CD8-positive, alpha-beta T cell (primary cell): ENCODE measurements at regions of chr18 and their contacts with region 1.

Region 1: DNA sequence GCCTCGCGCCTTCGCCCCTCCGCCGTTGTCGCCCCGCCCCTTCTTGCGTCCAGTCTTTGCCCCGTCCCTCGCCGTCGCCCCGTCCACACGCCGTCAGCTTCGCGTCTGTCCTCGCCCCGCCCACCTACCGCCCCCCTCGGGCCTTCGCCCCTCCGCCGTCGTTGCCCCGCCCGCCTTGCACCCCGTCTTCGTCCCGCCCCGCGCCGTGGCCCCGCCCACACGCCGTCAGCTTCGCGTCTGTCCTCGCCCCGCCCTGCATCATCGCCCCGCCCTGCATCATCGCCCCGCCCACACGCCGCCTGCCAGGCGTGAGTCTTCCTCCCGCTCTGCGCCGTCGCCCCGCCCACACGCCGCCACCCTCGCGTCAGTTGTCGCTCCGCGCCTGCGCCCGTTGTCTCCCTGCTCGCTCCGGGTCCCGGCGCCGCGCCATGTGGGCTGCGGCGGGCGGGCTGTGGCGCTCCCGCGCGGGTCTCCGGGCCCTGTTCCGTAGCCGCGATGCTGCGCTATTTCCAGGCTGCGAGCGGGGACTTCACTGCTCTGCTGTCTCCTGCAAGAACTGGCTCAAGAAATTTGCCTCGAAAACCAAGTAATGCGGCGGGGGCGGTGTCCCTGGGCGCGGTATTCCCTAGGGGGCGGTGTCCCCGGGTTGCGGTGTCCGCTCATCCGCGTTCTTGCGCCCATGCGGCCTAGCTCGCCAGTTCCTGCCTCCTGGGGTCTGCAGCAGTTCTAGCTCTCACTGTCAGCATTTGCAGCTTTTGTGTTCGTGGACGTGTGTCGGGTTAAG is at the start of gene RBFA:
- DNase-seq: peak; percentile 99 to 100 (median 100)
- ATAC-seq: peak; percentile 77
- H3K4me3 ChIP-seq: peak within 1 kb of the TSS; percentile 87 to 89
- H3K4me3 Mint-ChIP-seq: peak within 1 kb of the TSS; percentile 92
- H3K27ac ChIP-seq: peak within 1 kb of the TSS; percentile 79 to 97
- H3K27ac Mint-ChIP-seq: peak within 1 kb of the TSS; percentile 95
- H3K4me1 ChIP-seq: peaks cover 19% of the 10 kb centered on the region
- H3K4me1 Mint-ChIP-seq: peaks cover 27% of the 10 kb centered on the region
- H3K27me3 ChIP-seq: no peaks in the 10 kb centered on the region
- H3K27me3 Mint-ChIP-seq: no peaks in the 10 kb centered on the region
- CTCF ChIP-seq: no peak
- total RNA-seq, gene RBFA: 10.4 to 11.9 TPM

Region 2: DNA sequence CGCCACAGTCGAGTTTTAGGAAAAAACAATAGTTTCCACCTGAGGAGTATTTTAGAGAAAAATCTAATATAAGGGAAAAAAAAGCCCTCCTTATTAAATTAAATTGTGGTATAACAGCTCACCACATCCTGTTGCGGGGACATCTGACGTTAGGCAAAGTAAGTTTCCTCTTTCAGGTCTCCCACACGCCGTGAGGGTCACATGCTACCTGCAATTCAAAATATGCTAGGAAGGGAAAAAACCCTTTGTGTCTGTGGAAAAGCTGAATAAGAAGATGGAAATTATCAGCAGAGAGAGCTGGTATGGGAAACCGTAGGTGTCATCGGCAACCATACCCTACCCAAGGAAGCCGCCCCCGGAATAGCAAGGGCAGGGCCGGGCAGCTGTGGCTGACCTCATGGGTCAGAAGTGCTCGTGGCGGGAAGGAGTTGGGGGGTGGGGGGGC is 510.5 kb before region 1 on chr18:
- CTCF ChIA-PET with region 1: no interaction called
- POLR2A ChIA-PET with region 1: no interaction called
- intact Hi-C with region 1: loop called in 1 of 2 experiments (anchors 5 kb)
- DNase-seq: peak; percentile 44 to 93 (median 73)
- ATAC-seq: peak; percentile 52
- H3K4me3 ChIP-seq: peak overlapping the region; percentile 44 to 52
- H3K4me3 Mint-ChIP-seq: peak overlapping the region; percentile 86
- H3K27ac ChIP-seq: peak overlapping the region; percentile 81
- H3K27ac Mint-ChIP-seq: peak overlapping the region; percentile 97
- H3K4me1 ChIP-seq: peaks cover 62% of the 10 kb centered on the region
- H3K4me1 Mint-ChIP-seq: peaks cover 58% of the 10 kb centered on the region
- H3K27me3 ChIP-seq: no peaks in the 10 kb centered on the region
- H3K27me3 Mint-ChIP-seq: no peaks in the 10 kb centered on the region
- CTCF ChIP-seq: no peak

Region 3: DNA sequence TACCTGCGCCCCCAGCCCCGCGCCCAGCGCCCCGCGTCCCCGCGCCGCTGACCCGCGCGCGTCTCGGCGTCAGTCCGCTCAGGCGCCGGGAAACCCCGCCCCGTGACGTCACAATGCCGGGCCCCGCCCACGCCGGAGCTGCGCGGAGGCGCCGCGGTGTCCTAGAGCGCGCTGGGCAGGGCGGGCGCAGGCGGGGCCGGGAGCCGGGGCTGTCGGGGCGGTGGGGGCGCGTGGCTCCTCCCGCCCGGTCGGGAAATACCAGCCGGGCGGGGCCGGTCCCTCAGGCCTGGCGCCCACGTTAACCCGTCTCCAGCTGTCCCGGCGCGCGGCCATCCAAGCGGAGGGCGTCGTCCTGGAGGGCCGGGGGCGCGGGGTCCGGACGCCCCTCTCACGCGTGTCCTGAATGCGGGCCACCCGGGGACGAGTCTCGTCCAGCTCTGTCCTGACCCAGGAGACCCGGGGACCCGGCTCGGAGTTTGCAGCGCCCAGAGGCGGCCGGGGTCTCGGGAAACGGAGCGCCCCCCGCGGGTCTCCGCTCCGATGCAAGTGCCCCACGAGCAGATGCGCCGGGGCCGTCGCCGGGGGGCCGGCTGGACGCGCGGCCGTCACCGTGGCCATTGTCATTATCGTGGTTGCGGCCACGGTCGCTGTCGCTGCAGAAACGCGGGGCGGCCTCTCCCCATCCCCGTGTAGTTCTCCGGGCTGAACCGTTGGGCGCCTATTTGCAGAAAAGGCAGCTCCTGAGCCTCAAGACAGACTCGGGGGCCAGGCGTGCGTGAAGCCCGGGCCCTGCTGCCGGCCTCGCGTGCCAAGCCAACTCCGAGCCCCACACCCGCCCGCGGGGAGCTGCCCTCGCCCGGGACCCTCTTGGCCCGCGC is 82.4 kb before region 1 on chr18 and contains the start of gene SLC66A2:
- CTCF ChIA-PET with region 1: no interaction called
- POLR2A ChIA-PET with region 1: interaction called, 5 read pairs
- intact Hi-C with region 1: loop called (anchors 1 kb)
- DNase-seq: peak; percentile 91 to 99 (median 94)
- ATAC-seq: peak; percentile 93
- H3K4me3 ChIP-seq: peak within 1 kb of the TSS; percentile 60 to 69
- H3K4me3 Mint-ChIP-seq: peak within 1 kb of the TSS; percentile 88
- H3K27ac ChIP-seq: peak within 1 kb of the TSS in 1 of 2 experiments; percentile 58
- H3K27ac Mint-ChIP-seq: peak within 1 kb of the TSS; percentile 83
- H3K4me1 ChIP-seq: peaks cover 26% of the 10 kb centered on the region
- H3K4me1 Mint-ChIP-seq: peaks cover 26% of the 10 kb centered on the region
- H3K27me3 ChIP-seq: no peaks in the 10 kb centered on the region
- H3K27me3 Mint-ChIP-seq: no peaks in the 10 kb centered on the region
- CTCF ChIP-seq: no peak
- total RNA-seq, gene SLC66A2: 50.0 to 53.4 TPM

Region 4: DNA sequence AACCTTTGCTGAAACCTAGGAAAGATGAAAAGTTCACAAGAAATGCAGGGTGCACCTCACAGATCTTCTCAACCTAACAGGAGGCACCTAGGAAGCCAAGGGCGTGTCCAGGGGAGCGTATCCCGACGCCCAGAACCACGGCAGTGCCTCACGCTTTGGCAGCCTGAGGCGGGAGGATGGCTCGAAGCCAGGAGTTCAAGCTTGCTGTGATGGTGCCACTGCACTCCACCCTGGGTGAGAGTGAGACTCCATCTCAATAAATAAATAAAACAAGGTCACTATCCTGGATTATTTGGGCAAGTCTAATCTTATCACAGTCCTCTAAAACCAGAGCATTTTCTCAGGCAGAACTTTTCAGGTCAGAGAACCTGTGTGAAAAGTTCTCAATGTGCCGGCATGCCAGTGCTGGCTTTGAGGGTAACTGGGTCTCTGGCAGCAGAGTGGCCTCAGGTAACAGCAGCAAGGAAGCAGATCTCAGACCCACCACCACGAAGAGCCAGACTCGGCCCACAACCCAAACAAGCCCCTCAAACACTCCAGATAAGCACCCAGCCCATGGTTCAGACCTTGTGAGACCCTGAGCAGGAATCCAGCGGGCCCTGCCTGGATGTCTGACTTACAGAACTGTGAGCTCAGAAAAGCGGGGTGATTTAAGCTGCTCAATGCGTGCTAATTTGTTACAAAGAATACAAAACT is 58.1 kb before region 1 on chr18:
- CTCF ChIA-PET with region 1: no interaction called
- POLR2A ChIA-PET with region 1: no interaction called
- intact Hi-C with region 1: no loop called
- DNase-seq: no peak
- ATAC-seq: no peak
- H3K4me3 ChIP-seq: no peak overlapping the region
- H3K4me3 Mint-ChIP-seq: no peak overlapping the region
- H3K27ac ChIP-seq: no peak overlapping the region
- H3K27ac Mint-ChIP-seq: peak overlapping the region; percentile 27
- H3K4me1 ChIP-seq: peaks cover 12% of the 10 kb centered on the region
- H3K4me1 Mint-ChIP-seq: peaks cover 31% of the 10 kb centered on the region
- H3K27me3 ChIP-seq: no peaks in the 10 kb centered on the region
- H3K27me3 Mint-ChIP-seq: no peaks in the 10 kb centered on the region
- CTCF ChIP-seq: no peak

Region 5: GRCh38 chr18:80056095-80056494 is 21.8 kb after region 1 on chr18:
- CTCF ChIA-PET with region 1: no interaction called
- POLR2A ChIA-PET with region 1: no interaction called
- intact Hi-C with region 1: no loop called
- DNase-seq: no peak
- ATAC-seq: no peak
- H3K4me3 ChIP-seq: no peak overlapping the region
- H3K4me3 Mint-ChIP-seq: no peak overlapping the region
- H3K27ac ChIP-seq: no peak overlapping the region
- H3K27ac Mint-ChIP-seq: no peak overlapping the region
- H3K4me1 ChIP-seq: no peaks in the 10 kb centered on the region
- H3K4me1 Mint-ChIP-seq: no peaks in the 10 kb centered on the region
- H3K27me3 ChIP-seq: no peaks in the 10 kb centered on the region
- H3K27me3 Mint-ChIP-seq: no peaks in the 10 kb centered on the region
- CTCF ChIP-seq: no peak

Region 6: GRCh38 chr18:80067321-80067720 is 33.1 kb after region 1 on chr18:
- CTCF ChIA-PET with region 1: no interaction called
- POLR2A ChIA-PET with region 1: no interaction called
- intact Hi-C with region 1: no loop called
- DNase-seq: no peak
- ATAC-seq: no peak
- H3K4me3 ChIP-seq: no peak overlapping the region
- H3K4me3 Mint-ChIP-seq: no peak overlapping the region
- H3K27ac ChIP-seq: no peak overlapping the region
- H3K27ac Mint-ChIP-seq: no peak overlapping the region
- H3K4me1 ChIP-seq: no peaks in the 10 kb centered on the region
- H3K4me1 Mint-ChIP-seq: no peaks in the 10 kb centered on the region
- H3K27me3 ChIP-seq: no peaks in the 10 kb centered on the region
- H3K27me3 Mint-ChIP-seq: no peaks in the 10 kb centered on the region
- CTCF ChIP-seq: no peak

Region 7: DNA sequence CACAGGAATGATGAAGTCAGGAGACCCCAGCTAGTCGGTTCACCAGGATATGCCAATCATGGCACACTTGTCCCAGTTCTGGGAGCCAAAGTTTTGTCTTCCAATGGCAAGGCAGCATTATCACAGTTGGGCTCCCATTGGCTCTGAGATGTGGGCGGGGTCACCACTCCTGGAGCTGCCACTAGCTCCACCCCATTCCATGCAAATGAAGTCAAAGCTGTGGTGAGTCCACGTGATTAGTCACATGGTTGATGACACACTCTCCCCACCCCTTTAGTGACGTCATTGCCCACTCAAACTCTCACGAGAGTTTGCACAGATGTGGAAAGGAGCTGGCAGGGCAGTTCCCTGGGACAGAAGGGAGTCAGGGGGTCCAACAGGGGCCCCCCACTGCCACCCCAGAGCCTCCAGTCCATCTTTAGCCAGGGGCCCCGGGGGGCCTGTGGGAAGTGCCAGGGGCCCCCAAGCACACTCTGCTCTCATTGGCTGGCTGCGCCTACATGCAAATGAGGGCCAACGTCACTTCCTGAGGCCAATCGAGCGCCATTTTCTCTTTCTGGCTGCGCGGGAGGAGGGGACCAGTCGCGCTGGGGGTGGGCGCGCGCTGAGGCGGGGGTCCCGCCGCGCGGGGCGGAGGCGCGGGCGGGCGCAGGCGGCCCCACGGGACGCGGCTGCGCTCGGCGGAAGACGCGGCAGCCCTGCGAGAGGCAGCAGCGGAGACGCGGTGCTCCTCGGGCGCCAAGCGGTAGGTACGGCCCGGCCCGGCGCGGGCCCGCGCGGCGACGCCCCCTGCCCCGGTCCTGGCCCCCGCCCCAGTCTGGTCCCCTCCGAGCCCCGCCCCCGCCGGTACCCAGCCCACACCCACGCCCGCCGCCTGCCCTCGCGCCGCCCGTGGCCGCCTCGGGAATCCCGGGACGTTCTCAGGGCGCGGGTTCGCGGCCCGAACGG is 74.7 kb after region 1 on chr18 and contains the start of gene ADNP2:
- CTCF ChIA-PET with region 1: no interaction called
- POLR2A ChIA-PET with region 1: interaction called, 8 read pairs
- intact Hi-C with region 1: loop called (anchors 1 kb)
- DNase-seq: peak; percentile 41 to 96 (median 80)
- ATAC-seq: peak; percentile 80
- H3K4me3 ChIP-seq: peak within 1 kb of the TSS; percentile 66 to 72
- H3K4me3 Mint-ChIP-seq: peak within 1 kb of the TSS; percentile 84
- H3K27ac ChIP-seq: peak within 1 kb of the TSS; percentile 90 to 94
- H3K27ac Mint-ChIP-seq: peak within 1 kb of the TSS; percentile 95
- H3K4me1 ChIP-seq: peaks cover 16% of the 10 kb centered on the region
- H3K4me1 Mint-ChIP-seq: peaks cover 42% of the 10 kb centered on the region
- H3K27me3 ChIP-seq: no peaks in the 10 kb centered on the region
- H3K27me3 Mint-ChIP-seq: no peaks in the 10 kb centered on the region
- CTCF ChIP-seq: no peak
- total RNA-seq, gene ADNP2: 96.7 to 100 TPM

Region 8: DNA sequence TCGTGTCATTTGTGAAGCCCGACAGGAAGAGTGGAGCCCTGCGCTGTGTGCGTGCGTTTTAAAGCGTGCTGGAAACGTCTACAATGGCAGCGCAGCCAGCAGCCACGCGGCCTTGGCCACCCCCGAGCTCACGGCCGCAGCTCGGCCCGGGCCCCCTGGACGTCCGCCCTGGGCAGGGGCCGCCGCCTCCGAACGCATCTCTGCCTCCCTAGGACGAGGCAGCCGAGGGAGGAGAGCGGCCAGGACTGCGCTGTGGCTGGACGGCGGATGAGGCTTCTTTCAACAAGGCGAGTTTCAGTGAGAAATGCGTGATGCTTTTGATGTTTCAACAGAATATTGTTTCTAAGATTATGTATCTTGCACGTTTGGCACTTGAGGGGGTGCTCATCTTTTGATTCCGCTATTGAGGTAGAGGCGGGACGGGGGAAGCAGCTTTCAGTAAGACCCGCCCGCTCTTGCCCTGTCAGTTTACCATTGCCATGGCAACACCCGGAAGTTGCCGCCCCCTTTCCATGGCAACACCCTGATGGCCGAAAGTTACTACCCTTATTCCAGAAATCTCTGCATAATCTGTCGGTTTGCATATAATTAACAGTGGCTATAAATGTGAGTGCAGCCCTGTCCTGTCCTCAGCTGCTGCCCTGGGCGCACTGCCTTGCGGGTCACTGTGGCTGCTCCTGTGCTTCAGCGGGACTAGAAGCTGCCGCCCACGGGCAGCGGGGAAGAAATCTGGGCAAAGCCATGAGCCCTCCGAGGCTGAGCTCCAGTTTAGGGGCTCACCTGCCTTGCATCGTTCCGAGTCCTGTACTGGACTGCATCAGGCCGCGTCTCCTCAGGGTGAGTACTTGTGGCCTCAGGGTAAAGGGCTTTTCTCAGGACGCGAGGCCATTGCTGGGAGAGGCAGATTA is 113.4 kb after region 1 on chr18:
- CTCF ChIA-PET with region 1: no interaction called
- POLR2A ChIA-PET with region 1: no interaction called
- intact Hi-C with region 1: loop called (anchors 2 to 5 kb)
- DNase-seq: peak; percentile 52 to 85 (median 76)
- ATAC-seq: peak; percentile 88
- H3K4me3 ChIP-seq: peak overlapping the region; percentile 53 to 61
- H3K4me3 Mint-ChIP-seq: peak overlapping the region; percentile 83
- H3K27ac ChIP-seq: peak overlapping the region in 1 of 2 experiments; percentile 31
- H3K27ac Mint-ChIP-seq: no peak overlapping the region
- H3K4me1 ChIP-seq: peaks cover 11% of the 10 kb centered on the region
- H3K4me1 Mint-ChIP-seq: peaks cover 21% of the 10 kb centered on the region
- H3K27me3 ChIP-seq: no peaks in the 10 kb centered on the region
- H3K27me3 Mint-ChIP-seq: peaks cover 7% of the 10 kb centered on the region
- CTCF ChIP-seq: no peak

Region 9: GRCh38 chr18:80194874-80195570 is 160.8 kb after region 1 on chr18:
- CTCF ChIA-PET with region 1: no interaction called
- POLR2A ChIA-PET with region 1: no interaction called
- intact Hi-C with region 1: no loop called
- DNase-seq: no peak
- ATAC-seq: no peak
- H3K4me3 ChIP-seq: no peak overlapping the region
- H3K4me3 Mint-ChIP-seq: no peak overlapping the region
- H3K27ac ChIP-seq: no peak overlapping the region
- H3K27ac Mint-ChIP-seq: no peak overlapping the region
- H3K4me1 ChIP-seq: no peaks in the 10 kb centered on the region
- H3K4me1 Mint-ChIP-seq: no peaks in the 10 kb centered on the region
- H3K27me3 ChIP-seq: no peaks in the 10 kb centered on the region
- H3K27me3 Mint-ChIP-seq: peaks cover 16% of the 10 kb centered on the region
- CTCF ChIP-seq: no peak